Activated CD4-positive, alpha-beta memory T cell treated with anti-CD3 and anti-CD28 coated beads, Interleukin-2, amount 10 ng/mL, durations not matched to agents 7 days and 5 days (primary cell): ENCODE measurements at regions of chr17 and their contacts with region 1.

Region 1: DNA sequence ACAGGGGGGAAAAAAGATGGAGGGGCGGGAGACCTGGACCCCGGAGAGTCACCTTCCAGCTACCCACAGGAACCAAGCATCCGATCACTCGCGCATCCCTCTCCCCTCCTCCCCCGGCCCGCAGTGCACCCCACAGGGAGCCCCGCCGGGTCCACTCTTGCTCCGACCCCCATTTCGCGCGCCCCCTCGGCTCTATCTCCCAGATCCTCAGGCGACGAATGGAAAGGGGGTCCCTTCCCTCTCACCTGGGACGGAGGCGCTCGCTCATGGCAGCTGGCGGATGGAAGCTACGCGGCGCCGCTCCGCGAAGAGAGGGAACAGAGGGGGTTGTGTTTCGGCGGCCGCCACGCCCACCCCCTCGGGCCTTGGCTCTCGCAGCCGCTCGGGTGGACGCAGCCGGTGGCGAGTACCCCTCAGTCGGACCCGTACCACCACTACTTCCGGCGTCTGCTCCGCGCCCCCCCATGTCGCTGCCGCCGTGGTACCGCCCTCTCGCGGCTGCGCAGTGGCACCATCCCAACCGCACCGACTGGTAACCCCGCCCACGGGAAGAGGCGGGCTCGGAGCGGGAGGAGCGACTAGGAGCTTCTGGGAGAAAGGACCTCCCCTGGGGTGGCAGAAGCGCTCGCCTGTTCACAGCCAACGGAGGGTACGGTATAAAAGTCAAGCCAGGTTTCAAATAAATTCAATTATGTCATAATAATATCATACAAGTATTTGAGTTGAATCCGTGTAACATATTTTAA is 29.7 kb downstream of the CPSF4L start:
- DNase-seq: peak; percentile 96
- H3K4me3 Mint-ChIP-seq: peak overlapping the region; percentile 90
- H3K27ac Mint-ChIP-seq: peak overlapping the region; percentile 88
- H3K4me1 Mint-ChIP-seq: peaks cover 68% of the 10 kb centered on the region
- H3K27me3 Mint-ChIP-seq: no peaks in the 10 kb centered on the region

Region 2: GRCh38 chr17:72715906-72716572 is 516.0 kb before region 1 on chr17:
- CTCF ChIA-PET with region 1: interaction called, 4 read pairs
- POLR2A ChIA-PET with region 1: interaction called, 15 read pairs
- DNase-seq: no peak
- H3K4me3 Mint-ChIP-seq: no peak overlapping the region
- H3K27ac Mint-ChIP-seq: no peak overlapping the region
- H3K4me1 Mint-ChIP-seq: peaks cover 69% of the 10 kb centered on the region
- H3K27me3 Mint-ChIP-seq: no peaks in the 10 kb centered on the region

Region 3: GRCh38 chr17:73192894-73193701 is 38.9 kb before region 1 on chr17 and contains the start of gene COG1:
- CTCF ChIA-PET with region 1: interaction called, 25 read pairs
- POLR2A ChIA-PET with region 1: interaction called, 68 read pairs
- DNase-seq: peak; percentile 92
- H3K4me3 Mint-ChIP-seq: peak within 1 kb of the TSS; percentile 95
- H3K27ac Mint-ChIP-seq: peak within 1 kb of the TSS; percentile 94
- H3K4me1 Mint-ChIP-seq: peaks cover 38% of the 10 kb centered on the region
- H3K27me3 Mint-ChIP-seq: no peaks in the 10 kb centered on the region
- total RNA-seq, gene COG1: 30.4 to 32.9 TPM

Region 4: GRCh38 chr17:73210002-73210678 is 21.9 kb before region 1 on chr17:
- CTCF ChIA-PET with region 1: interaction called, 7 read pairs
- POLR2A ChIA-PET with region 1: interaction called, 21 read pairs
- DNase-seq: no peak
- H3K4me3 Mint-ChIP-seq: no peak overlapping the region
- H3K27ac Mint-ChIP-seq: peak overlapping the region; percentile 44
- H3K4me1 Mint-ChIP-seq: peaks cover 30% of the 10 kb centered on the region
- H3K27me3 Mint-ChIP-seq: no peaks in the 10 kb centered on the region

Region 5: GRCh38 chr17:73215447-73215846 is 16.6 kb before region 1 on chr17:
- CTCF ChIA-PET with region 1: interaction called, 7 read pairs
- POLR2A ChIA-PET with region 1: interaction called, 21 read pairs
- DNase-seq: no peak
- H3K4me3 Mint-ChIP-seq: no peak overlapping the region
- H3K27ac Mint-ChIP-seq: no peak overlapping the region
- H3K4me1 Mint-ChIP-seq: peaks cover 37% of the 10 kb centered on the region
- H3K27me3 Mint-ChIP-seq: no peaks in the 10 kb centered on the region

Region 6: DNA sequence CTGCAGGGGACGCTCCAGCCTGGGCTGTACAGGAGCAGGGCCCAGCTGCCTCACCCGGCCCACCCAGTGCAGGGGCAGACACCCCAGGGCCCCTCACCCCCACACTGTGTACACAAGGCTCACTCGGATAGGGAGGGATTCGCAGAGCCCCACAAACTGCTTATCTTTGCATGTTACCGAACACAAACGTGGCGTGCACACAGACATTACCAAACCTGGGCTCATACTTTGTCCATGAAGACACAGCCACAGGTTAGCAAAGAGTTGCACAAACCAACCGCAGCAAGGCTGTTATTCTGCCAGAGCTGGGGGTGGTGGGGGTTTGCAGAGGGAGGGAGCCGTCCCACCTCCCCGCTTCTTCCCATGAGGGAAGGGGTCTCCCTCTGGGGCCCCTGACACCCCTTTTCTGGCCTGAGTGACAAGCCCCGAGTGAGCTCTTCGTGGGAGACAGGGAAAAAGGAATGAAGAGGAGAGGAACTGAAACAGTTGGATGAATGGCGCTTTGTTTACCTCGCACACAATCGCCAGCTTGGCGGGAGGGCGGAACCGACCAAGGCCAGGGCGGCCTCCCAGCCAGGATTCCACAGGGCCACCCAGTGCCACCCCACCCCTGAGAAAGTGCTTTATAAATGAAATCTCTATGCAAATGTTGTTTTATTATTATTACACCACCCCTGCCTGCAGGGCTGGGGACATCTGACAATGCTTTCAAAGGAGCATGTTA is 30.1 kb after region 1 on chr17:
- CTCF ChIA-PET with region 1: no interaction called
- POLR2A ChIA-PET with region 1: no interaction called
- DNase-seq: no peak
- H3K4me3 Mint-ChIP-seq: no peak overlapping the region
- H3K27ac Mint-ChIP-seq: no peak overlapping the region
- H3K4me1 Mint-ChIP-seq: no peaks in the 10 kb centered on the region
- H3K27me3 Mint-ChIP-seq: peaks cover 2% of the 10 kb centered on the region

Region 7: GRCh38 chr17:73278465-73279453 is 46.7 kb after region 1 on chr17:
- CTCF ChIA-PET with region 1: no interaction called
- POLR2A ChIA-PET with region 1: no interaction called
- DNase-seq: no peak
- H3K4me3 Mint-ChIP-seq: no peak overlapping the region
- H3K27ac Mint-ChIP-seq: no peak overlapping the region
- H3K4me1 Mint-ChIP-seq: no peaks in the 10 kb centered on the region
- H3K27me3 Mint-ChIP-seq: no peaks in the 10 kb centered on the region

Region 8: GRCh38 chr17:73311781-73312641 is 80.0 kb after region 1 on chr17 and contains the start of gene CDC42EP4:
- CTCF ChIA-PET with region 1: interaction called, 6 read pairs
- POLR2A ChIA-PET with region 1: interaction called, 13 read pairs
- DNase-seq: peak; percentile 92
- H3K4me3 Mint-ChIP-seq: peak within 1 kb of the TSS; percentile 76
- H3K27ac Mint-ChIP-seq: no peak within 1 kb of the TSS
- H3K4me1 Mint-ChIP-seq: peaks cover 9% of the 10 kb centered on the region
- H3K27me3 Mint-ChIP-seq: peaks cover 5% of the 10 kb centered on the region
- total RNA-seq, gene CDC42EP4: 3.6 to 3.8 TPM

Region 9: GRCh38 chr17:73371285-73371684 is 139.3 kb after region 1 on chr17:
- CTCF ChIA-PET with region 1: interaction called, 11 read pairs
- POLR2A ChIA-PET with region 1: no interaction called
- DNase-seq: no peak
- H3K4me3 Mint-ChIP-seq: no peak overlapping the region
- H3K27ac Mint-ChIP-seq: no peak overlapping the region
- H3K4me1 Mint-ChIP-seq: no peaks in the 10 kb centered on the region
- H3K27me3 Mint-ChIP-seq: peaks cover 8% of the 10 kb centered on the region